Heart right ventricle (tissue), 16 donors: ENCODE measurements at regions of chr2 and their contacts with region 1.

Region 1: DNA sequence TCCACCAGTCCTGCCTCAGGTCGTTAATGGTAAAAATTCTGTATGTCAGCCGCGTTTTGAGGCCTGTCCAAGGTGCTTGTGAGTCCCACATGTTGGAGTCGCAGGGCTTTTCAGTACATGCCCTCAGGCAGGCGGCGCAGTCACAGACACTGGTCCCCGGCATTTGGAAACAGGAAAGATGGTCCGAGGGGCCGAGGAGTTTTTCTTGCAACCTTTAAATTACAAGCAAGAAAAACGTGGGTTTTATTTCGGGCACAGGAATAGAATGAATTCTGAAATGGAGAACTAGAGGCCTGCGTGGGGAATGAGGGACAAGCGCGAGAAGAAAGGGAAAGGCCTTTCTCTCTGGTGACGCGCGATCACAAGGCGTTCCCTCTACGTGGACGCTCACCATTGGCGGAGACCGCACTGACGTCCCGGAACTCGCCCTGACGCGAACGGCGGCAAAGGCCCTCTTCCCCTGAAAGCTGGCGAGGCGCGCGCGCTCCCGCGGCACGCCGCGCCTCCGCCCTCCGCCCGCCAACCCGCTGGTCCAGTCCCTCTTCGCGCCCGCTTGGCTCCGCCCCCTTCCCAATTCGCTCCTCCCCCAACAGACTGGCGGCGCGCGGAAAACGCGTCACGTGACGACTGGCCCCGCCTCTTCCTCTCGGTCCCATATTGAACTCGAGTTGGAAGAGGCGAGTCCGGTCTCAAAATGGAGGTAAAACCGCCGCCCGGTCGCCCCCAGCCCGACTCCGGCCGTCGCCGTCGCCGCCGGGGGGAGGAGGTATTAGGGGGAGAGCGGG is at the start of gene HNRNPA3:
- DNase-seq: peak; percentile 99 to 100
- ATAC-seq: peak; percentile 95 to 97 (median 96)
- H3K4me3 ChIP-seq: peak within 1 kb of the TSS; percentile 69 to 96 (median 86)
- H3K27ac ChIP-seq: peak within 1 kb of the TSS; percentile 93 to 100 (median 99)
- H3K4me1 ChIP-seq: peaks cover 8 to 53% (median 48%) of the 10 kb centered on the region in 9 donors
- H3K27me3 ChIP-seq: no peaks in the 10 kb centered on the region
- CTCF ChIP-seq: peak in 7 of 9 donors; percentile 16 to 60 (median 29)
- total RNA-seq, gene HNRNPA3: 63.7 to 93.8 (median 77.6) TPM

Region 2: DNA sequence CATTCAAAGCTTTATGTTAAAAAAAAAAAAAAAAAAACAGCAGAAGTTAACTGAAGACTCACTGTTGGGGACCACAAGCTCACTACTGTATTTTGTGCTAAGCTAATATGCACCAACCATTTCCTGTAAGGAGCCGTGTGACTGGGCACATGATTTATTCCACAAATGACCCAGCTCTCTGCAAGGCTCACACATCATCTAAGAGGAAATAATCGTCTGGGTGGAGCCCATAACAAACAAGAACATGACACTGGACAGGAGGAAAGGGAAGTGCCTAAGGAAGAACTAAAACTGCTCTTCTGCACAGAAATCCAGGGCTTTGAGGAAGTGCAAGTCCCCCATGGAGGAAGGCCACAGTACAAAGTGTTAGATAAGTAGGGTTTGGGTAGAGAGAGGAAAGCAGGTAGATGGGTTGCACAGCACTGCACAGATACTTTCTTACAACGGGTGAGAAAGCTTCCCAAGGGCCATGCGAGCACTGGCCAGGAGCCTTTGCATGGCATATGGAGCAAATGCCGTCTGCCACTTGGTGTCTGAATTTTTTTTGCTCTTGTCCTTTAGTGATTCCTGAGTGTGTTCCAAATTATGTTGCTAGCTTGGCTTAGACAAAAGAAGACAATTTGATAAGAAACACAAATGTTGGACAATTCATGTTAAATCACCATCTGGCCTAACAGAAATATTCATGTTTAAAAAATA is 27.8 kb after region 1 on chr2:
- intact Hi-C with region 1: loop called in 1 of 10 experiments (anchors 2 kb)
- DNase-seq: peak in 1 of 2 donors; percentile 49
- ATAC-seq: peak; percentile 24 to 83 (median 68)
- H3K4me3 ChIP-seq: peak overlapping the region in 2 of 10 donors; percentile 11 to 20
- H3K27ac ChIP-seq: peak overlapping the region in 9 of 10 donors; percentile 61 to 90 (median 80)
- H3K4me1 ChIP-seq: peaks cover 12 to 100% (median 98%) of the 10 kb centered on the region in 9 donors
- H3K27me3 ChIP-seq: no peaks in the 10 kb centered on the region
- CTCF ChIP-seq: no peak